Activated B cell treated with CpG ODN at 0.5 μM for 24 hours (primary cell): ENCODE measurements at regions of chr7 and their contacts with region 1.

Region 1: GRCh38 chr7:2072042-2072441 is 160.7 kb downstream of the MAD1L1 start:
- DNase-seq: peak; percentile 33
- ATAC-seq: peak; percentile 94
- H3K4me3 Mint-ChIP-seq: peak overlapping the region; percentile 59
- H3K27ac Mint-ChIP-seq: peak overlapping the region; percentile 79
- H3K4me1 Mint-ChIP-seq: peaks cover 54% of the 10 kb centered on the region
- H3K27me3 Mint-ChIP-seq: no peaks in the 10 kb centered on the region
- CTCF ChIP-seq: no peak

Region 2: GRCh38 chr7:2037808-2038522 is 34.1 kb before region 1 on chr7:
- CTCF ChIA-PET with region 1: no interaction called
- POLR2A ChIA-PET with region 1: interaction called, 5 read pairs
- intact Hi-C with region 1: loop called (anchors 2 kb)
- DNase-seq: no peak
- ATAC-seq: peak; percentile 79
- H3K4me3 Mint-ChIP-seq: peak overlapping the region; percentile 86
- H3K27ac Mint-ChIP-seq: peak overlapping the region; percentile 86
- H3K4me1 Mint-ChIP-seq: peaks cover 67% of the 10 kb centered on the region
- H3K27me3 Mint-ChIP-seq: no peaks in the 10 kb centered on the region
- CTCF ChIP-seq: no peak

Region 3: DNA sequence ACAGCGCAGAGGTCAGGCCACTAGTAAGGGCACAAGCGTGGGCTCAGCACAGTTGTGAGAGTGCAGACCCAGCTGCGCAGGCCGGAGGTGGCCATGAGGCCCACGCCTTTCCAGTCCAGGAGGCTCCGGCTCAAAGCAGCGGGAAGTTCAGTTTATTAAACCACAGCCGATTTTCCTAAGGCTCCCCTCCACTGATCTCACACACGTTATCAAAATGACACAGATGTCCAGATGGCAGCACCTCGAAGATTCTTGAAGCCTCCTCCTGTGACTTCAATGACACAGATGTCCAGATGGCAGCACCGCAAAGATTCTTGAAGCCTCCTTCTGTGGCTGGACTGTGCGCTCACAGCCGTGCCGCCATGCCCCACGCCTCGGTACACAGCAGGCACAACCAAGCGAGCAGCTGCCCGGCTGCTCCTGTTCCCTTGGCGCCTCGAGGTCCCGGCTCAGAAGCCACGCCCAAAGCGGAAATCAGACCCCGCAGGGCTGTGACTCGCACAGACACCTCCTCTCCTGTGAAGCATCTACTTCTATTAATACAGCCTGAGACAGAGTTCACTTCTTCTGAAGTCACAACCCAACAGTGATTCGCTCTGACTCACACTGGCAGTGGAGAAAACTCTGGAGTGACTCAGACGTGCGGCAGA is 38.0 kb after region 1 on chr7:
- CTCF ChIA-PET with region 1: no interaction called
- POLR2A ChIA-PET with region 1: no interaction called
- intact Hi-C with region 1: loop called (anchors 1 kb)
- DNase-seq: peak; percentile 40
- ATAC-seq: peak; percentile 81
- H3K4me3 Mint-ChIP-seq: peak overlapping the region; percentile 58
- H3K27ac Mint-ChIP-seq: peak overlapping the region; percentile 76
- H3K4me1 Mint-ChIP-seq: peaks cover 43% of the 10 kb centered on the region
- H3K27me3 Mint-ChIP-seq: no peaks in the 10 kb centered on the region
- CTCF ChIP-seq: no peak

Region 4: DNA sequence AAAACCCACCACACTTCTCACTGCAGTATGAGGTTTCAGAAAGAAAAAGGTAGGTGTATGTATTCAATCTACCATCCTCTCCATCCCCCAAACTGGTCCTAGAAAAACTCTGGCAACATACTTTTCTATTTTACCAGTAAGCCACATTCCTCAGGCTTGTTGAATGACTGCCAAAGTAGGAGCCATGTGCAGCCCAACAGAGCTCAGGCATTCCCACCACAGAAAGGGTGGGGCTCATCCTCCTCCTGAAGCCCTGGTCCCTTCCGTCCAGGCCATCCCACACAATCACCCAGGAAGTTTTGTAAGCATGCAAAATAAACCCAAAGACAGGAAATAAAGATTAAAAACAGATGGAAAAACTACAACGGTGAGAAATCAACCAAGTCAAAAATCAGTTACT is 103.5 kb after region 1 on chr7:
- CTCF ChIA-PET with region 1: no interaction called
- POLR2A ChIA-PET with region 1: interaction called, 15 read pairs
- intact Hi-C with region 1: no loop called
- DNase-seq: no peak
- ATAC-seq: no peak
- H3K4me3 Mint-ChIP-seq: no peak overlapping the region
- H3K27ac Mint-ChIP-seq: no peak overlapping the region
- H3K4me1 Mint-ChIP-seq: no peaks in the 10 kb centered on the region
- H3K27me3 Mint-ChIP-seq: no peaks in the 10 kb centered on the region
- CTCF ChIP-seq: no peak